Activated CD4-positive, alpha-beta memory T cell treated with anti-CD3 and anti-CD28 coated beads for 36 hours (primary cell): ENCODE measurements at regions of chr3 and their contacts with region 1.

Region 1: DNA sequence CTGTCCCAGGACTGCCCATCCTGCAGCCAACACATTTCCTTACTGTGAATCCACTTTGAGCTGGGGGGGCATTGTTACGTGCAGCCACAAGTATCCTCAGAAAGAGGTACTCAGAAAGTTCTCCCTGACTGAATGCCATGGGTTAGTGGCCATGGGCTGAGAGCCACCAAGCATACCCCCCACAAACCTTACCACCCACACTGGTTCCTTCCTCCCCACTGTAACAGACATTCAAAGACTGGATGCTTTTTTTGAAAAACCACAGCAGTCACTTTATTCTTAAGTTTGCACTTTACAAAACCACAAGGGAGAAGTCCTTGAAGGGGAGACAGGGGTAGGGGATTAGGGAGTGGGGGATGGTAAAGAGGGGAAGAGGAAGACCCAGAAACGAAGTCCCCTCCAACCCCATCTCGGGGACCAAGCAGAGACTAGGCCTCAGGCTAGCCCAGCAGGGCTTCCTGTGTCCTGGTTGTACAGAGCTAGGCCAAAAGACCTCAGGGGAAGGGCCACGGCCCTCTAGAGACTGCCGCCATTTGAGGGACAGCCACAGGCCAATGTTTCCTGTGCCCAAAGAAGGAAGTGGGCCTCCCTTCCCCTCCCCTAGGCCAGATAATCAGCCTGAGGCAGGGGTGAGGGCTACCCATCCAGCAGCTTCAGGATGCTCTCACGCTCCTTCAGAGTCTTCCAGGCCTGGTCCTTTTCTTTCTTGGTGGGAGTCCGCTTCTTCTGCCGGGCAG is 10.1 kb upstream of the CAMK1 start:
- DNase-seq: peak; percentile 62
- H3K4me3 Mint-ChIP-seq: peak overlapping the region; percentile 39
- H3K27ac Mint-ChIP-seq: peak overlapping the region; percentile 93
- H3K4me1 Mint-ChIP-seq: peaks cover 62% of the 10 kb centered on the region
- H3K27me3 Mint-ChIP-seq: no peaks in the 10 kb centered on the region

Region 2: DNA sequence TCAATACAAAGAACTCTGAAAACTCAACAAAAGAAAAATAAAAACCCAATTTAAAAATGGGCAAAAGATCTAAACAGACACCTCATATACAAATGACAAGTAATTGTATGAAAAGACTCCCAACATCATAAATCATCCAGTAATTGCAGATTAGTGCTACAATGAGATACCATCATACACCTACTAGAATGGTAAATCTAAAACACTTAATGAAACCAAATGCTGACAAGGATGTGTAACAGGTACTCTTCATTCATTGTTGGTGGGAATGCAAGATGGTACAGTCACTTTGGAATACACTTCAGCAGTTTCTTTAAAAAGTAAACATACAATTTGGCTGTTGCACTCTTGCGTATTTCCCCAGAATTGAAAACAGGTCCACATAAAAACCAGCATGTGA is 294.6 kb before region 1 on chr3:
- CTCF ChIA-PET with region 1: no interaction called
- POLR2A ChIA-PET with region 1: no interaction called
- intact Hi-C with region 1: no loop called
- DNase-seq: no peak
- H3K4me3 Mint-ChIP-seq: no peak overlapping the region
- H3K27ac Mint-ChIP-seq: no peak overlapping the region
- H3K4me1 Mint-ChIP-seq: no peaks in the 10 kb centered on the region
- H3K27me3 Mint-ChIP-seq: no peaks in the 10 kb centered on the region

Region 3: DNA sequence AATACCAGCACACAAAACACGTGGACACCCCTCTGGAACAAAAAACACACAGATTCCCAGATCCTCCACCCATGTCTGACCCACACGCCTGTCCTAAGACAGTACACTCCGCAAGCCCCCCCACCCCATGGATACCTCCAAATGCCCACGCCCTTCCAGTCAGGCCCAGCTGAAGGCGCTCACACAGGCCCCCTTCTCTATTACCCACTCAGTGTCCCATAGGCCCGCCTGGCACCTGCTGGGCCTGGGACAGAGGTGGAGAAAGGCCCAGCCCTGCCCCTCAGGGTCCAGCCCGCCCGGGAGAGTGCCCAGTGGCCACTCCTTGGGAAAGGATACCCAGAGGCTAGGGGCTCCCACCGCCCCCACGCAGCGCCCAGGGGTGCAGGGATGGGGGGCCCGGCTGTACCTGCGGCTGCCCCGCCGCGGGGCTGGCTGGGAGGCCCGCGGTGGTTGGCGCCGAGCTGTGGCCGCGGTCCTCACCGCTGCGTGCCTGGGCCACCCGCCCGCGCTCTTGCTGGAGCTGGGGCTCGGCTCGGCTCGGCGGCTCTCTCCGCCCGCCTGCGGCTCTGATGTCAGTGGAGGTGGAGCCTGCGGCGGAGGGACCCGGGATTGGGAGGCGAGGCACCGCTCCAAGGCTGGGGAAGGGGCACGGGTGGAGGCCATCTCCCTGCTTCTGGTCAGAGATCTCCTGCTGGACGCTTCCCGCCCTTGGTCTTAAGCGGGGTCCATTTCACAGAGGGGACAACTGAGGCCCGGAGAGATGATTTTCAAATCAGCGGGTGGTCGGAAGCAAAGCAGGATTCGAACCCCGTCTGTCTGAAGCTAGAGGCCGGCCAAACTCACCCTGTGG is 10.2 kb before region 1 on chr3 and contains the start of gene CAMK1:
- CTCF ChIA-PET with region 1: interaction called, 3 read pairs
- POLR2A ChIA-PET with region 1: interaction called, 11 read pairs
- intact Hi-C with region 1: loop called (anchors 1 kb)
- DNase-seq: peak; percentile 84
- H3K4me3 Mint-ChIP-seq: peak within 1 kb of the TSS; percentile 80
- H3K27ac Mint-ChIP-seq: peak within 1 kb of the TSS; percentile 69
- H3K4me1 Mint-ChIP-seq: peaks cover 33% of the 10 kb centered on the region
- H3K27me3 Mint-ChIP-seq: no peaks in the 10 kb centered on the region
- total RNA-seq, gene CAMK1: 48.2 to 51.9 TPM

Region 4: GRCh38 chr3:10205451-10206165 is 425.7 kb after region 1 on chr3:
- CTCF ChIA-PET with region 1: no interaction called
- POLR2A ChIA-PET with region 1: no interaction called
- intact Hi-C with region 1: no loop called
- DNase-seq: no peak
- H3K4me3 Mint-ChIP-seq: no peak overlapping the region
- H3K27ac Mint-ChIP-seq: no peak overlapping the region
- H3K4me1 Mint-ChIP-seq: peaks cover 31% of the 10 kb centered on the region
- H3K27me3 Mint-ChIP-seq: no peaks in the 10 kb centered on the region